Activated B cell treated with CpG ODN at 0.5 μM for 24 hours (primary cell): ENCODE measurements at regions of chrX and their contacts with region 1.

Region 1: DNA sequence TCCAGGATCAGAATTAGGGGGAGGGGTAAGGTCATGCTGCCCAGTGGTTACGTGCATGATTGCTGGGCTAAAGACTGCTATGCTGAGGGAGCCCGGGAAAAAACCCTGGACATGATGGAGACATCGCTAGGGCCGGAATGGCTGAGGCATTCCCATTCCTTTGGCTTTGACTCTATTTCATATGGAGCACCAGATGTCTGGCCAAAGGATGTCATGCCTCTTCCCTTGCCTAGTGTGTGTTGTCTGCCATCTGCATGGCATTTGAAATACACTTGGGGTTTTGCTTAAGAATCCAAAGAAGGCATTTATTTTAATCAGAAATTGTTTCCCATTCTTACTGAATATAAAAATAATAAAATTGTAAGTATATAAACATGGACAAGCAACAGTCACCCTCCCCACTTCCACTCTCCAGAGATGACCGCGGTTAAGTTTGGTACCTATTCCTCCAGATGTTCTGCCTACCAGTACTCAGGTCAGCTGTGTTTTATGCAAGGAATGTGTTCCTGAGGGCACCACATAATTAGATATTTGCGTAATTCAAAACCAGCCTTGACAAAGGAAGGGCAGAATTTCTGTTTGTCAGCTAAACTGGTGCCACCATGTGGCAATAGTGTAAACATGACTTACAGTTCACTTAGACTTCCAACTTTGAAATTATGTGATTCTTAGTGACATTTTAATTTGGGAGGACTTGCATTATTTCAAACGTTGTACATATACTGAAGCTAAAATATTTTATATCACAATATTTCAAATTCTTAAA is 105.9 kb downstream of the CT47B1 start:
- DNase-seq: no peak
- ATAC-seq: no peak
- H3K4me3 Mint-ChIP-seq: no peak overlapping the region
- H3K27ac Mint-ChIP-seq: no peak overlapping the region
- H3K4me1 Mint-ChIP-seq: peaks cover 2% of the 10 kb centered on the region
- H3K27me3 Mint-ChIP-seq: no peaks in the 10 kb centered on the region
- CTCF ChIP-seq: no peak

Region 2: DNA sequence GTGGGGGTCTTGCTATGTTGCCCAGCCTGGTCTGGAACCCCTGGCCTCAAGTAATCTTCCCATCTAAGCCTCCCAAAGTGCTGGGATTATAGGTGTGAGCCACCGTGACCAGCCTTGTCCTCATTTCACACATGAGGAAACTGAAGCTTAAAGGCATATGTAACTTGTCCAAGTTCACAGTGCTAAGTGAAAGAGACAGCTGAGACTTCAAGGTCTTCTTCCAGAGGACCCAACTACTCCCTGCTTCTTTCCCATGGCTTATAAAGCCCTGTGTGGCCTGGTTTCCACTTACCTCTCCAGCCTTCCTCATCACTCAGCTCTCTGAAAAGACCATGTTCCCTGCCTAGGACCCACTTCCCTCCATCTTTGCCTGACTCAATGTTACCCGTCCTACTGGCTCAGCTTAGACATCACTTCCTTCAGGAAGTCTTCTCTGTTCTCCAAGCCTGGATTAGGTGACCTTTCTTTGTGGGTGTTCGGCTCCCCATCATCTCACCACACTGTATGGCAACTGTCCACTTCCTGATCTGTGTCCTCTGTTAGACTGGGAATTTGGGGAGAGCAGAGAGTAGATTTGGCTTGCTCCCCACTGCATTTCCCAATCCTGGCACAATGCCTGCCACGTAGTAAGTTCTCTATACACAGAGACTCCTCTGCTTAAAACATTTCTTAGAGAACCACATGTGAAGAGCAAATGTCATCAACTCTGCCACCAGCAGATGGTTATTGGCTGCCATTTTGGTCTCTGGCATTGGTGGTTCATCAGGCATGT is 270.3 kb before region 1 on chrX:
- CTCF ChIA-PET with region 1: interaction called, 3 read pairs
- POLR2A ChIA-PET with region 1: no interaction called
- intact Hi-C with region 1: loop called (anchors 1 kb)
- DNase-seq: no peak
- ATAC-seq: no peak
- H3K4me3 Mint-ChIP-seq: no peak overlapping the region
- H3K27ac Mint-ChIP-seq: no peak overlapping the region
- H3K4me1 Mint-ChIP-seq: peaks cover 3% of the 10 kb centered on the region
- H3K27me3 Mint-ChIP-seq: no peaks in the 10 kb centered on the region
- CTCF ChIP-seq: no peak

Region 3: GRCh38 chrX:120514236-120514635 is 255.5 kb before region 1 on chrX:
- CTCF ChIA-PET with region 1: no interaction called
- POLR2A ChIA-PET with region 1: no interaction called
- intact Hi-C with region 1: loop called (anchors 5 kb)
- DNase-seq: no peak
- ATAC-seq: no peak
- H3K4me3 Mint-ChIP-seq: no peak overlapping the region
- H3K27ac Mint-ChIP-seq: no peak overlapping the region
- H3K4me1 Mint-ChIP-seq: no peaks in the 10 kb centered on the region
- H3K27me3 Mint-ChIP-seq: no peaks in the 10 kb centered on the region
- CTCF ChIP-seq: no peak

Region 4: GRCh38 chrX:120664081-120664480 is 105.7 kb before region 1 on chrX:
- CTCF ChIA-PET with region 1: no interaction called
- POLR2A ChIA-PET with region 1: no interaction called
- intact Hi-C with region 1: loop called (anchors 1 kb)
- DNase-seq: no peak
- ATAC-seq: no peak
- H3K4me3 Mint-ChIP-seq: no peak overlapping the region
- H3K27ac Mint-ChIP-seq: no peak overlapping the region
- H3K4me1 Mint-ChIP-seq: peaks cover 4% of the 10 kb centered on the region
- H3K27me3 Mint-ChIP-seq: no peaks in the 10 kb centered on the region
- CTCF ChIP-seq: no peak

Region 5: DNA sequence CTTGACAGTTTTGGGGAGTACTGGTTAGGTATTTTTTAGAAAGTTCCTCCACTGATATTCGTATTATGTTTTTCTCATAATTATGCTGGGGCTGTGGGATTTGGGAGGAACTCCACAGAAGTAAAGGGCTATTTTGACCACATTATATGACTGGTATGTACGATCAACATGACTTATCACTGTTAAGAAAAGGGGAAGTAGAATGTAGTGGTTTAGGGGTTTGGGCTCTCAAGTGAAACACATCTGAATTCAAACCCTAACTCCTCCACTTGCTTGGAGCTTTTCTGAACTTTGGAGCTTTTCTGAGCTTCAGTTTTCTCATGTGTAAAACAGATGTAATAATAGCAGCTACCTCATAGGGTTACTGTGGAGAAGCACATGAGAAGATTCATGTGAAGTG is 43.5 kb before region 1 on chrX:
- CTCF ChIA-PET with region 1: interaction called, 6 read pairs
- POLR2A ChIA-PET with region 1: no interaction called
- intact Hi-C with region 1: loop called (anchors 5 kb)
- DNase-seq: no peak
- ATAC-seq: peak; percentile 95
- H3K4me3 Mint-ChIP-seq: peak overlapping the region; percentile 39
- H3K27ac Mint-ChIP-seq: peak overlapping the region; percentile 81
- H3K4me1 Mint-ChIP-seq: peaks cover 26% of the 10 kb centered on the region
- H3K27me3 Mint-ChIP-seq: no peaks in the 10 kb centered on the region
- CTCF ChIP-seq: no peak

Region 6: DNA sequence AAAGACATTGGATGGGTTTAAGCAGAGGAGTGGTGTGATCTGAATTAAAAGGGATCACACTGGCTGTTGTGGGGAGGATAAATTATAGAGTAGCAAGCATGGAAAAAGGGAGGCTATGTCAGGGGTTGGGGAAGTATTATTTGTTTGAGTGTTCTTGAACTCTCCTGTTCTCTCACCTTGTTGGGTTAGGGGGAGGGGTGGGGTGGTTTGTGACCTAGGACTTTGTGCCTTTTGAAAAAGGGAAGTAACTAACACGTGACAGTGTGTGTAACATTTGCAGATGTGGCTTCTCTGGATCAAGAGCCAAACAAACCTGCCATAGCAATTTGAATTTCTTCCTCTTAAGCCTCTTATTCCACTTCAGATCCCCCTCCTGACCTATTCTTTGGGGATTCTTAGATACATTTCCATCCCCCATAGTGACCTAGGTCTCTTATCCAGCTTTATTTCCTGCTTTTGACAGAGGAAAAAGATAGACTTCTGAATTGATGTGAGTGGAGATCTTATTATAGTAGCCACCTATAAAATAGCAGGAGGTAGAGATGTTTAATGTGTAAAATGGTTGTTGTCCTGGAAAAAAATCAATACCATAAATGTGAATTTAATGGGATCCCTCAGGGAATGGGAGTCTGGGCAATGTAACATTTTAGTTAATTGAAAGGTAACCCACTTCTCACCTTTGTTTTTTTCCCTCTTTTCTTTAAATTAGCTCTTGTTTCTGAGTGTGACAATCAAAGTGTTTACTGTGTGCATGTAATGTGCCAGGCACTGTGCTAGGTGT is 14.5 kb before region 1 on chrX:
- CTCF ChIA-PET with region 1: interaction called, 6 read pairs
- POLR2A ChIA-PET with region 1: no interaction called
- intact Hi-C with region 1: loop called (anchors 2 kb)
- DNase-seq: peak; percentile 23
- ATAC-seq: peak; percentile 79
- H3K4me3 Mint-ChIP-seq: peak overlapping the region; percentile 3
- H3K27ac Mint-ChIP-seq: peak overlapping the region; percentile 90
- H3K4me1 Mint-ChIP-seq: peaks cover 88% of the 10 kb centered on the region
- H3K27me3 Mint-ChIP-seq: no peaks in the 10 kb centered on the region
- CTCF ChIP-seq: no peak

Region 7: GRCh38 chrX:120797188-120797851 is 27.6 kb after region 1 on chrX:
- CTCF ChIA-PET with region 1: no interaction called
- POLR2A ChIA-PET with region 1: no interaction called
- intact Hi-C with region 1: no loop called
- DNase-seq: no peak
- ATAC-seq: no peak
- H3K4me3 Mint-ChIP-seq: no peak overlapping the region
- H3K27ac Mint-ChIP-seq: no peak overlapping the region
- H3K4me1 Mint-ChIP-seq: no peaks in the 10 kb centered on the region
- H3K27me3 Mint-ChIP-seq: no peaks in the 10 kb centered on the region
- CTCF ChIP-seq: no peak